ENCODE measurements at regions of chr4 and their contacts with region 1.

Region 1: DNA sequence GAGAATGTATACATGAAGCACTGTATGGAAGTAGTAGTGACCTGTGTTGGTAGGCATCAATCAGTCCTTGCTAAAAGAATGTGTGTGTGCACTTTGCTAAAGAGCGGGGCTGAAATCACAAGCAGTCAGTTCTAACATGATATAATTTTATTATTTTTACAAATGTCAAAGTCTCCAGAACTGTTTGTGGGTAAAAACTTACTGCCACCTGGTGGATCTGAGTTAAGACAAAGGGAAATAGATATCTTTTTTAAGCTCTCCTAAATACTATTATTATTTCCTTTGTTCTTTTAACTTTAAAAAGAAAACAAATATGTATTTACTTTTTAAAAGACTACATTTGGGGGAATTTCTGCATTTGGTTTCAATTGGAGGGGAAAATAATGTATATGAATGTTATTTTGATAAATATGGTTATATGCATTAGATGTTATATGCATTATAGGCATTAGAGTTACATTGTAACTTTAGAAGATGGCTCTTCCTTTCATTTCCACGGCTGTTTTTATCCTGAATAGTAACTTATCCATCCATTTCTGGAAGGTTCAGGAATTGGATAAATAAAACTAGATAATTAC is 7.8 kb upstream of the CLOCK start:
- DNase-seq: peak; percentile 36
- ATAC-seq: no peak
- H3K4me3 ChIP-seq: no peak overlapping the region
- H3K27ac ChIP-seq: no peak overlapping the region
- H3K4me1 ChIP-seq: peaks cover 20 to 35% of the 10 kb centered on the region in 2 experiments
- H3K27me3 ChIP-seq: no peaks in the 10 kb centered on the region
- CTCF ChIP-seq: peak; percentile 42 to 81 (median 48)
- POLR2A ChIP-seq: no peak
- RAD21 ChIP-seq: peak; percentile 82

Region 2: DNA sequence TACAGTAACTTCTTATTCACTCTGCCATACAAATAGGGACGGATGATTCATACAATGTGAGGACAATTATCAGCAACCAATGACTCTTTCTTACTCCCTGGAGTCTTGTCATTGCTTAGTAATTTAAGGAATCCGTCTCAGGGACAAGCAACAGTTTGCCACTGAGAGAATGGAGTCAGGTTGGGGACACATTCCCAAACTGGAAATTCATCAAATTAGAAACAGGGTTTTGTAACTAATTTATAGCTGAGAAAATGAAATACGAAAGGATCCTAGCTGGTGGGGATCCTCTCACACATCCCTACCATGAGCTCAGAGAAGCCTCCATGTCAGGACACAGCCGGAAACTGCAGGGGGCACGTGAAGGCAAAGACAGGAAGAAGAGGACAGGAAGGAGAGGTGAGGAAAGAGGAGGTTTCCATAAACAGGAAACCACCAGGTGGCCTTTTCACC is 378.7 kb before region 1 on chr4:
- CTCF ChIA-PET with region 1: no interaction called
- POLR2A ChIA-PET with region 1: no interaction called
- RAD21 ChIA-PET with region 1: no interaction called
- intact Hi-C with region 1: loop called (anchors 5 kb)
- DNase-seq: peak; percentile 60
- ATAC-seq: peak; percentile 89
- H3K4me3 ChIP-seq: peak overlapping the region; percentile 66 to 89
- H3K27ac ChIP-seq: peak overlapping the region; percentile 73
- H3K4me1 ChIP-seq: peaks cover 11 to 42% of the 10 kb centered on the region in 2 experiments
- H3K27me3 ChIP-seq: no peaks in the 10 kb centered on the region
- CTCF ChIP-seq: 0 out of 6 replicates have a peak, but pooled peaks of 1 of the 3 experiments have one; percentile 12
- POLR2A ChIP-seq: peak; percentile 82
- RAD21 ChIP-seq: no peak

Region 3: DNA sequence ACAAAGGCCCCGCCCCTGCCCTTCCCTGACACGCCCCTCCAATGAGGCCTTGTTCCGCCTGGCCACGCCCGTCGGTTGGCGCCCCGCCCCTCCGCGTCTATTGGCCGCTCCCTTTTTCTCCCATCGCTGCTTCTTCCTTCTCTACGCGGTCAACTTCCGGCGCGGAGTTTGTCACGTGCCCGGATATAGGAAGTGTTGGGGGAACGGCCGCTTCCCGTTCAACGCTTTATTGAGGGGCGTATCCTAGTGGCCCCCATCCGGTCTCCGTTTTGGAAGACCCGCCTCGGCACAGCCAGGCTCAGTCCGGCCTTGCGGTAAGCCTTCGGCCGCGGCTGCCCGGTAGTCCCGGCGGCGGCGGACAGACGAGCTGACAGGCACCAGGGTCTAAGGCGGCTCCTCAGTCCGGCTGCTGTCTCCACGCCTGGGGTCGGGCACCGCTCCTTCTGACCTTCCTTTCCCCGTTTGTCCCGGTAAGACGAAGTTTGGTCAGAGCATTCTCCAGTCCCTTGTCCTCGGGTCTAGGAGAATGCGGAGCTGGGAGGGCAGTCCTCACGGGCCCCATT is 299.0 kb after region 1 on chr4 and contains the start of gene EXOC1:
- CTCF ChIA-PET with region 1: no interaction called
- POLR2A ChIA-PET with region 1: no interaction called
- RAD21 ChIA-PET with region 1: no interaction called
- intact Hi-C with region 1: loop called (anchors 5 kb)
- DNase-seq: peak; percentile 93
- ATAC-seq: peak; percentile 97
- H3K4me3 ChIP-seq: peak within 1 kb of the TSS; percentile 89 to 94
- H3K27ac ChIP-seq: peak within 1 kb of the TSS; percentile 48; the same call in 1 of the 2 replicates
- H3K4me1 ChIP-seq: peaks cover 0 to 25% of the 10 kb centered on the region in 2 experiments; a peak in 2 of 4 replicates
- H3K27me3 ChIP-seq: no peaks in the 10 kb centered on the region
- CTCF ChIP-seq: no peak
- POLR2A ChIP-seq: peak; percentile 32
- RAD21 ChIP-seq: no peak
- total RNA-seq, gene EXOC1: 17.6 TPM

Region 4: GRCh38 chr4:56139241-56139827 is 584.8 kb after region 1 on chr4:
- CTCF ChIA-PET with region 1: no interaction called
- POLR2A ChIA-PET with region 1: no interaction called
- RAD21 ChIA-PET with region 1: no interaction called
- intact Hi-C with region 1: no loop called
- DNase-seq: no peak
- ATAC-seq: no peak
- H3K4me3 ChIP-seq: no peak overlapping the region
- H3K27ac ChIP-seq: no peak overlapping the region
- H3K4me1 ChIP-seq: peaks cover 14 to 16% of the 10 kb centered on the region in 2 experiments
- H3K27me3 ChIP-seq: no peaks in the 10 kb centered on the region
- CTCF ChIP-seq: no peak
- POLR2A ChIP-seq: no peak
- RAD21 ChIP-seq: no peak